ENCODE measurements at regions of chr11 and their contacts with region 1.

Region 1: DNA sequence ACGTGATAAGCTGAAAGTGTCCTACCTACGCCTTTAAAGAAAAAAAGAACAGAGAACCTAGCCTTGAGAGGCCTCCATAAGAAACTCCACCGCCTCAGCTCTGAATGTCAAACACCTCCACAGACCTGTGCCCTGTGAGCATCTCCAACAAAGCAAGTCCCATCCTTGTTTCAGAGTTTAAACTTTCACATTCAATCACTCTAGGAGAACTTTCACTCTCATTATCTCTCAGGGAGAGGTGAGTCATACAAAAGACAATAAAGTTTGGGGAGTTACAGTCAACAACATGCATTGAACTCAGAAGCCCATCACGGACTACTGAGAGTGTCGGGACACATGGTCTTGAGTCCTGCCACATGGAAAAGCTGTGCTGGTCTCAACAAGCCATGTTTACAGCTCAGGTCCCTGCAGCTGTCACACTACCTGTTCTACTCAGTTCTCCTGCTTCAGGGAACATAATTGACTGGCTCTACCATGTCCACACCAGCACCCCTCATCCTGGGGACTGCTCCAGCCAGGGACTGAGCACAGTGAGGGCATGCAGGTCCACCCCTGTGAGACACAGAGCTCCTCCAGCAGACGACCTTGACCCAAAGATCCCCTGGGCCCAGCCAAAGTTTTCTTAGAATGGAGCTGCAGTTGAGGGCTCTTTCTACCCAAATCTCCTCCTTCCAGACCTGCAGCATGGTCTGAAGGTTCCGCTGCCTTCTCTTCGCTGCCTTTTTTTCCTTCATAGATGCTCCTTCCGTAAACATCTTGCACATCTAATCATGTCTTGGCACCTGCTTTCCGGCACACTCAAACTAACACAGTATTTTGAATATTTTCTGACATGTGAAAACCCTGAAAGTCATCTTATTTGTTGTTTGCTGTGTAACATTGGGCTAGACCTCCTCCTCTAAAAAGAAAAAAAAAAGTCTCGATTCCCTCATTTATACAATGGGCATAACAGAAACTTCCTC is 114.9 kb downstream of the ETS1 start:
- DNase-seq: peak in 6 of 14 experiments; percentile 41 to 79 (median 64)
- ATAC-seq: peak; percentile 19
- H3K4me3 ChIP-seq: peak overlapping the region; percentile 37
- H3K4me3 Mint-ChIP-seq: peak overlapping the region; percentile 64
- H3K27ac ChIP-seq: peak overlapping the region; percentile 92 to 94
- H3K27ac Mint-ChIP-seq: peak overlapping the region; percentile 99
- H3K4me1 ChIP-seq: peaks cover 90% of the 10 kb centered on the region
- H3K4me1 Mint-ChIP-seq: peaks cover 99% of the 10 kb centered on the region
- H3K27me3 ChIP-seq: no peaks in the 10 kb centered on the region
- H3K27me3 Mint-ChIP-seq: no peaks in the 10 kb centered on the region
- CTCF ChIP-seq: no peak

Region 2: DNA sequence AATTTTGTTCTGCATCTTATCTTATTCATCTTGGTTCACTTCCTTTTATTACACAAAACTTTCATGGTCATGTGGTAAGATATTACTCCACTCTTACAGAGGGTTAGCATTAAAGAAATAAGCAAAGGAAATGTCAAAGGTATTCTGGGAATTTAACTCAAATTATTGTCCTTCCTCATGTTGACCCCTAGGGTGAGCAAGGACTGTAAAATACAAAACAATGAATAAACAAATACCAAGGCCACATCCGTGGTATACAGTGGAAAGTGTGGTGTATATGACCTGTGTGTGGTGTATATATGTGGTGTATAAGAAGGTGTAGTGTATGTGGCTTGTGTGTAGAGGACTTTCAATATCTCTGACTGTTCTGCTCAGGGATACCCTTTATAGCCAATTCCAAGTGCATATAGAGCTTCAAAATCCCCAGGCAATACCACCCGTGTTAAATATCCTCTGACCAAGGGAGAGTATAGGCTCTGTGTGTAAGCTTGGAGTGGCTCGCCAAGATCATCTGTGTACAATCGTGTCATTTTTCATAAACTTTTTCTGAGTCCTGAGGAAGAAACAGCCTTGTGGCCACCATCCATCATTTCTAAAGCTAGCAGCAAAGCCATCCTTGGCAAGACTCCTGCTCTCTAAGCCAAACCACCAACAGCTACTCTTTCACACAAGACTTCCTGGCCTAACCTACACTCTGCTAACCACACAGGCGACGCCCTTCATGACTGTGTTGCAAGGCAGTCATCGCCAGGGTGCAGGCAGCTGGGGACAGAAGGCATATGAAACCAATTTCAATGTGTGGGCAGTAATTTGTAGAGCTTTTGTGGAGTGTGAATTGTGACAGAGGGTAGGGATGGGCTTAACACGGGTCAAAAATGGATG is 433.0 kb before region 1 on chr11:
- CTCF ChIA-PET with region 1: no interaction called
- POLR2A ChIA-PET with region 1: interaction called, 3 read pairs
- intact Hi-C with region 1: loop called (anchors 10 kb)
- DNase-seq: peak; percentile 55 to 94 (median 72)
- ATAC-seq: peak; percentile 96
- H3K4me3 ChIP-seq: peak overlapping the region; percentile 47
- H3K4me3 Mint-ChIP-seq: peak overlapping the region; percentile 72
- H3K27ac ChIP-seq: peak overlapping the region; percentile 29 to 50
- H3K27ac Mint-ChIP-seq: no peak overlapping the region
- H3K4me1 ChIP-seq: peaks cover 64% of the 10 kb centered on the region
- H3K4me1 Mint-ChIP-seq: peaks cover 59% of the 10 kb centered on the region
- H3K27me3 ChIP-seq: no peaks in the 10 kb centered on the region
- H3K27me3 Mint-ChIP-seq: no peaks in the 10 kb centered on the region
- CTCF ChIP-seq: peak; percentile 8

Region 3: DNA sequence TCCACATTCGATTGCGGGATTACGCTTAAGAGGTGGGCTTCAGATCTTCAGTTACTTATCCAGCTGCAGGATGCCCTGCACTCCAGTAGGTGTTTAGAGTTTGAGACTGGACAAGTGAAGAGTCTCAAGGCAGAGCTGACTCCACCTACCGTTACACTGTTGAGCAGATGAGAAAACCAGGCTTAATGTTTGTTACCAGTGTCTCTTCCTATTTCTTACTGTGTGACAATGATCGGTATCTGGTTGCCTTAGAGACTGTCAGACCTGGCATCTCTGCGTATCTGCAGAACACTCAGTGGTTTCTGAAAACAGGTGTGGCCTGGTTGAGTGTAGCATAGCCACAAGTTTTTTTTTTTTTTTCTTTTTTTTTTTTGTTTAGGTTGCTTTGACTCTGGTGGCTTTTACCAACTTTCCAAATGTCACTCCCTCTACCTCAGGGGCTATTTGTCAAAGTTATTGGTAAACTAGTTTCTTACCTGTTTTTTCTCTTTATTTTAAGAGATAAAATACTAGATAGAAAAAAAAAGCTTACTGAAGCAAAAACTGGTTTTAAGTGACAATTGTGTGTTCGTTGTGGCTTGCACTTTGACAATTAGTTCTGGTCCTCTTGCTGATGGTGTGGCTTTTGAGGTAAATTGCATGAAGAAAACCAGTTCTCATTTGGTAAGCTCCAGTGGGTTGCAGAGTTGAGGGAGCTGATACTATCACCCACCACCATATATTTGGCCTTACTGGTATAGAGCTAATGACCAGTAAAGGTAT is 169.8 kb before region 1 on chr11:
- CTCF ChIA-PET with region 1: interaction called, 5 read pairs
- POLR2A ChIA-PET with region 1: interaction called, 121 read pairs
- intact Hi-C with region 1: loop called in 1 of 2 experiments (anchors 2 kb)
- DNase-seq: peak; percentile 49 to 97 (median 65)
- ATAC-seq: peak; percentile 85
- H3K4me3 ChIP-seq: peak overlapping the region; percentile 65
- H3K4me3 Mint-ChIP-seq: peak overlapping the region; percentile 94
- H3K27ac ChIP-seq: peak overlapping the region; percentile 90 to 94
- H3K27ac Mint-ChIP-seq: peak overlapping the region; percentile 100
- H3K4me1 ChIP-seq: peaks cover 82% of the 10 kb centered on the region
- H3K4me1 Mint-ChIP-seq: peaks cover 98% of the 10 kb centered on the region
- H3K27me3 ChIP-seq: no peaks in the 10 kb centered on the region
- H3K27me3 Mint-ChIP-seq: no peaks in the 10 kb centered on the region
- CTCF ChIP-seq: peak; percentile 46

Region 4: DNA sequence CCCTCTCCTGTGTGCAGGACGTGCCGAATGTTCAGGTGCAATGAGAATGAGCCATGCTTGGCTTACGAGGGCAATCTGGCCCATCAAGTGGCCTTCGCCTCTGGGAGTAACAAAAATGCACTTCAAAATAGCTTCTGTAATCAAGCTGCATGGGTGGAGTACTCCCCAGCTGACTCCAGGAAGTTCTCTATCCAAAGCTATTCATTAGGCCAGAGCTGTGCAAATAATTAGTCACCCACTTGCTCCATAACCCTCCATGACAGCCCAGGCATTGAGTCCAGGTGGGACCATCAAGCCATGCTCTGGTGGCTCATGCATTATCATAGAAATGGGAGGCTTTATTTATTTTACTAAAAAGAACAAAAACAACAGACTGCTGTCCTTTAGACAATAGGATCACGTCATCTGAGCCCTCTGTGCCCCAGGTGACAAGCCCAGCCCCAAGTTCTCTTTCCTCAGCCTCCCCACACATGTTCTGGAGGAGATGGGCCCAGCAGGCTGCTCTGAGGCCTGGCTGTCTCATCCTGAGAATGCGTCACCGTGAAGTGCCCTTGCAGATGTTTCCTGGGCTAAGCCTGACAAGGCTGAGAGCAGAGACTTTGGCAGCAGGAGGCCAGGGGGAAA is 129.8 kb before region 1 on chr11:
- CTCF ChIA-PET with region 1: no interaction called
- POLR2A ChIA-PET with region 1: interaction called, 27 read pairs
- intact Hi-C with region 1: loop called in 1 of 2 experiments (anchors 2 kb)
- DNase-seq: peak in 11 of 14 experiments; percentile 24 to 83 (median 67)
- ATAC-seq: peak; percentile 67
- H3K4me3 ChIP-seq: no peak overlapping the region
- H3K4me3 Mint-ChIP-seq: peak overlapping the region; percentile 73
- H3K27ac ChIP-seq: peak overlapping the region; percentile 79 to 88
- H3K27ac Mint-ChIP-seq: peak overlapping the region; percentile 99
- H3K4me1 ChIP-seq: peaks cover 65% of the 10 kb centered on the region
- H3K4me1 Mint-ChIP-seq: peaks cover 97% of the 10 kb centered on the region
- H3K27me3 ChIP-seq: no peaks in the 10 kb centered on the region
- H3K27me3 Mint-ChIP-seq: no peaks in the 10 kb centered on the region
- CTCF ChIP-seq: no peak

Region 5: DNA sequence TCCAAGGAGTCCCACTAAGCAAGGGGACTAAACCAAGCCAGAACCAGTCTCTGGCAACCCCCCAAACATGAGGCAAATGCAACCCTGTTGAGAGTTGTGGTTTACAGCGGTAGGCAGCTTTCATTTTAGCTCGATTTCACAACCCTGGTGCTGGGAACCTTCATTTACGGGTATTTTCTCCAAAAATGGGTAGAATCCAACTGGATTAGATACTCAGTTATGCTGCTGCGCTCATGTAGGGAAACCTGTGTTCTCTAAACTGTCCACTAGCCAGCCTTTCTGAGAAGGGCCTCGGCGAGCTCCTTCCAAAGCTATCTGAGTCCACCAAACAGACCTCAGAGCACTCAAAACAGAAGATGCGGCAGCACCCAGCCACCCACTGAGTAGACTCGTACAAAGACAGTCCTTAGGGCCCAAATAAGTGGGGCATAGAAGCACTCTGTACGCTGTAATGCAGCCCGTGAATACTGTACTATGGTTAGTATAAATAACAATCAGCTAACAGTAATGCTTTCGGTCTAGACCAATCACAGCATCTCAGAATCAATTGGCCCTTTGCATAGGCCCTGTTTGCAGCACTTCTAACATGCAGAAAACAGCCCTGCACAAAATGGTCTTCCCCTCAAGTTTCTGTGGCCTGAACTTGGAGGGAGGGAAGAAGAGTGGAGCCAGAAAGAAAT is 10.2 kb after region 1 on chr11:
- CTCF ChIA-PET with region 1: interaction called, 4 read pairs
- POLR2A ChIA-PET with region 1: interaction called, 476 read pairs
- intact Hi-C with region 1: loop called in 1 of 2 experiments (anchors 1 kb)
- DNase-seq: peak in 6 of 14 experiments; percentile 51 to 87 (median 70)
- ATAC-seq: peak; percentile 58
- H3K4me3 ChIP-seq: peak overlapping the region; percentile 46
- H3K4me3 Mint-ChIP-seq: peak overlapping the region; percentile 76
- H3K27ac ChIP-seq: peak overlapping the region; percentile 92 to 94
- H3K27ac Mint-ChIP-seq: peak overlapping the region; percentile 99
- H3K4me1 ChIP-seq: peaks cover 95% of the 10 kb centered on the region
- H3K4me1 Mint-ChIP-seq: peaks cover 99% of the 10 kb centered on the region
- H3K27me3 ChIP-seq: no peaks in the 10 kb centered on the region
- H3K27me3 Mint-ChIP-seq: no peaks in the 10 kb centered on the region
- CTCF ChIP-seq: no peak

Region 6: DNA sequence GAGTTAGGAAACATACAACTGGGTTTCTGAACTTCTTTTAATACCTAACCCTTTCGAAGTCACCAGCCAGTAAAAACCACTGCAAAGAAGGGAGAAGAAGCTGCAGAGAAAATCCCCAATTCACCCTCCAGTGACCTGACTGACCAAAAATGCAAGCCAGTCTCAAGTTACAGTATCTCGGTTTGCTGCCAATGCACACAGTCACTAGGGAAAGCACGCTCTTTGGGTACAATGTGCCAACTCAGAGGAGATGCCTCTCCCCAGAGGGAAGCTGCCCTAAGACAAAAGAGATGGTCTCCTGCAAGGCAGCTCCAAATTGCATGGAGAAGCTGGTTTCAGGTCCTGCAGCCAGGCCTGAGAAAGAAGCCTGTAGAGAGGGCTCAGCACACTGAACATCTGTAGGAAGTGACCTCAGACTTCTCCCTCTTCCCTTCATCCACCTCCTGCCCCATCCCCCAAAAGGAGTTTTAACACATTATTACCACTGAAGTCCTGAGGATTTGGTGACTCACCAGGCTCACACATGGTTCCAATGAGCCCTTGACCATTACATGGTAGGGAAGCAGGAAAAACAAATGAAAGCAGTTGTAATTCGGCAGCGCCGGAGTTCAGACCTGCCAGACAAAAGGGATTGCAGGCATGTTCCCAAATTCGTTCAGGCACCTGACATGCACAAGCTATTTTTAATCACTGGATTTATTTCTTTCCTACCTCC is 24.8 kb after region 1 on chr11:
- CTCF ChIA-PET with region 1: no interaction called
- POLR2A ChIA-PET with region 1: interaction called, 476 read pairs
- intact Hi-C with region 1: loop called in 1 of 2 experiments (anchors 2 kb)
- DNase-seq: peak in 3 of 14 experiments; percentile 16 to 65 (median 59)
- ATAC-seq: no peak
- H3K4me3 ChIP-seq: peak overlapping the region; percentile 39
- H3K4me3 Mint-ChIP-seq: peak overlapping the region; percentile 65
- H3K27ac ChIP-seq: peak overlapping the region; percentile 39 to 93
- H3K27ac Mint-ChIP-seq: peak overlapping the region; percentile 99
- H3K4me1 ChIP-seq: peaks cover 75% of the 10 kb centered on the region
- H3K4me1 Mint-ChIP-seq: peaks cover 100% of the 10 kb centered on the region
- H3K27me3 ChIP-seq: no peaks in the 10 kb centered on the region
- H3K27me3 Mint-ChIP-seq: no peaks in the 10 kb centered on the region
- CTCF ChIP-seq: no peak

Region 7: GRCh38 chr11:128630367-128631230 is 158.2 kb after region 1 on chr11:
- CTCF ChIA-PET with region 1: interaction called, 9 read pairs
- POLR2A ChIA-PET with region 1: interaction called, 21 read pairs
- intact Hi-C with region 1: no loop called
- DNase-seq: peak; percentile 85 to 98 (median 92)
- ATAC-seq: peak; percentile 79
- H3K4me3 ChIP-seq: no peak overlapping the region
- H3K4me3 Mint-ChIP-seq: peak overlapping the region; percentile 62
- H3K27ac ChIP-seq: peak overlapping the region; percentile 56 to 70
- H3K27ac Mint-ChIP-seq: peak overlapping the region; percentile 97
- H3K4me1 ChIP-seq: peaks cover 65% of the 10 kb centered on the region
- H3K4me1 Mint-ChIP-seq: peaks cover 69% of the 10 kb centered on the region
- H3K27me3 ChIP-seq: no peaks in the 10 kb centered on the region
- H3K27me3 Mint-ChIP-seq: no peaks in the 10 kb centered on the region
- CTCF ChIP-seq: peak; percentile 89

Region 8: DNA sequence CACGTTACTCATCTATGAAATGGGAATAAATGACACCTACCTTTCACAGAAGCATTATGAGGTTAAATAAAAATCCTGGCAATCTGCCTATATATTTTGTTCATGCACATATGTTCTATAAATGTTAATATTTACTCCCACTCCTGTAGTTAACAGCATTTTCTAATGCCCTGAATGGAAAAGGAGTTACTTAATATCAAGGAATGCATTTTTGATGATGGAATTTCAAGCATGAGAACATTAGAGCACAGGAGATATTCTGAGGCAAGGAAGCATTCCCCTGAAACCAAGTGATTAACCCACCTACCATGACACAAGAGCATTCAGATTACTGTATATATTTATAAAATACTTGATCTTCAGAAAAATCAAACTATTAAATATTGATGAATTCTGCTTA is 617.6 kb after region 1 on chr11:
- CTCF ChIA-PET with region 1: no interaction called
- POLR2A ChIA-PET with region 1: no interaction called
- intact Hi-C with region 1: no loop called
- DNase-seq: no peak
- ATAC-seq: no peak
- H3K4me3 ChIP-seq: no peak overlapping the region
- H3K4me3 Mint-ChIP-seq: no peak overlapping the region
- H3K27ac ChIP-seq: no peak overlapping the region
- H3K27ac Mint-ChIP-seq: no peak overlapping the region
- H3K4me1 ChIP-seq: no peaks in the 10 kb centered on the region
- H3K4me1 Mint-ChIP-seq: no peaks in the 10 kb centered on the region
- H3K27me3 ChIP-seq: no peaks in the 10 kb centered on the region
- H3K27me3 Mint-ChIP-seq: no peaks in the 10 kb centered on the region
- CTCF ChIP-seq: no peak